CD4-positive, alpha-beta memory T cell (primary cell): ENCODE measurements at regions of chr14 and their contacts with region 1.

Region 1: GRCh38 chr14:64914237-64914971 is at the start of gene CHURC1:
- DNase-seq: peak; percentile 94 to 99 (median 97)
- H3K4me3 ChIP-seq: peak within 1 kb of the TSS; percentile 90 to 99
- H3K4me3 Mint-ChIP-seq: peak within 1 kb of the TSS; percentile 84 to 95 (median 90)
- H3K27ac ChIP-seq: peak within 1 kb of the TSS; percentile 100
- H3K27ac Mint-ChIP-seq: peak within 1 kb of the TSS; percentile 92 to 99 (median 98)
- H3K4me1 ChIP-seq: peaks cover 46% of the 10 kb centered on the region
- H3K4me1 Mint-ChIP-seq: peaks cover 33 to 56% (median 45%) of the 10 kb centered on the region in 4 donors
- H3K27me3 ChIP-seq: no peaks in the 10 kb centered on the region
- H3K27me3 Mint-ChIP-seq: peaks cover 0 to 1% of the 10 kb centered on the region in 2 donors
- total RNA-seq, gene CHURC1: 112 to 116 TPM

Region 2: DNA sequence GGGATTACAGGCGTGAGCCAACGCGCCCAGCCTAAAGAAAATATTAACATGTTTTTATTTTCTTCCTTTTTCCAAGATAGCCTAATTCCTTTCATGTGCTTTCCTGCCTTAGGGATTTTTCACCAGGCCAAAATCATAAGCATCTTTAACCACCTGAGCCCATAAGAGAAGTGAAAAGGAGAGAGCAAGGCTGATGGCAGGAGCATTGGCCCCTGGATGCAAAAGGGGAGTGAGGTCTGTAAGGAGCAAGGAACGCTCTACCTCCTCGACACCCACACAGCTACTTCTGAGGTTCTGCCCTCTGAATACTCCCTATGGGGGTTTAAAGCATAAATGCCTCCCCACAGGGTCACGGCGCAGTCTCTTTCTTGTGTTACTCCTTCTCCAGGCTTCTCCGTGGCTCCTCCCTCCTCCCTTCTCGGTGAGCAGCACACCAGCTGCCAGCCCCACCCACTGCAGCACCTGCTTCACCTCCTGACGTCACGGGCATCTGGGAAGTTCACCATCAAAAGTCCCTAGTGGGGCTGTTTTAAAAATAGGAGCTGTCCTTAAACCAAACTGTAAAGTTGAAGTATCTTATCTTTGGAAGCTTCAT is 102.1 kb before region 1 on chr14:
- CTCF ChIA-PET with region 1: no interaction called
- POLR2A ChIA-PET with region 1: no interaction called
- intact Hi-C with region 1: no loop called
- DNase-seq: peak; percentile 32 to 78 (median 48)
- H3K4me3 ChIP-seq: no peak overlapping the region
- H3K4me3 Mint-ChIP-seq: no peak overlapping the region
- H3K27ac ChIP-seq: no peak overlapping the region
- H3K27ac Mint-ChIP-seq: peak overlapping the region in 2 of 7 donors; percentile 74 to 81
- H3K4me1 ChIP-seq: peaks cover 4% of the 10 kb centered on the region
- H3K4me1 Mint-ChIP-seq: peaks cover 3 to 6% (median 5%) of the 10 kb centered on the region in 4 donors
- H3K27me3 ChIP-seq: no peaks in the 10 kb centered on the region
- H3K27me3 Mint-ChIP-seq: peaks cover 8 to 11% of the 10 kb centered on the region in 2 donors

Region 3: GRCh38 chr14:64928239-64929013 is 14.0 kb after region 1 on chr14:
- CTCF ChIA-PET with region 1: interaction called, 5 read pairs
- POLR2A ChIA-PET with region 1: interaction called, 111 read pairs
- intact Hi-C with region 1: loop called (anchors 1 kb)
- DNase-seq: peak in 4 of 5 donors; percentile 42 to 63 (median 55)
- H3K4me3 ChIP-seq: peak overlapping the region in 1 of 2 donors; percentile 30
- H3K4me3 Mint-ChIP-seq: no peak overlapping the region
- H3K27ac ChIP-seq: peak overlapping the region; percentile 56
- H3K27ac Mint-ChIP-seq: no peak overlapping the region
- H3K4me1 ChIP-seq: peaks cover 86% of the 10 kb centered on the region
- H3K4me1 Mint-ChIP-seq: peaks cover 21 to 38% (median 30%) of the 10 kb centered on the region in 4 donors
- H3K27me3 ChIP-seq: no peaks in the 10 kb centered on the region
- H3K27me3 Mint-ChIP-seq: no peaks in the 10 kb centered on the region

Region 4: DNA sequence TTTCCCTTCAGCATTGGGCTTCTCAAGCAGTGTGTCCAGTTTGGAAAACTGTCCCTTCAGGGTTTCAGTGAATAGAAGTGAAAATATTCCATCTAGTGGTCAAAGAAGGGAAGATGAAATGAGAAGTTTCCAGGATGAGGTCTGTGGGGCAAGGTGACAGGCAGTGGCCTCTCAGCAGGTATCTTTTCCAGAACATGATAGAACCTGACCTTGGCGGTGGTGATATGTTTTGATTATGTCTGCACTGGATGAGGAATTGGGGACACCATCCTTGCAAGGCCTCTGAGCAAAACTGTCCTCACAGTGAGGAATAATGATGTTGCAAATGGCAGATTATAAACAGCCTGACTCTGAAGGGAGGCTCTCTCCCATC is 23.4 kb after region 1 on chr14:
- CTCF ChIA-PET with region 1: interaction called, 4 read pairs
- POLR2A ChIA-PET with region 1: interaction called, 11 read pairs
- intact Hi-C with region 1: no loop called
- DNase-seq: no peak
- H3K4me3 ChIP-seq: no peak overlapping the region
- H3K4me3 Mint-ChIP-seq: no peak overlapping the region
- H3K27ac ChIP-seq: no peak overlapping the region
- H3K27ac Mint-ChIP-seq: peak overlapping the region in 6 of 7 donors; percentile 13 to 70 (median 62)
- H3K4me1 ChIP-seq: peaks cover 17% of the 10 kb centered on the region
- H3K4me1 Mint-ChIP-seq: peaks cover 37 to 83% (median 56%) of the 10 kb centered on the region in 4 donors
- H3K27me3 ChIP-seq: no peaks in the 10 kb centered on the region
- H3K27me3 Mint-ChIP-seq: no peaks in the 10 kb centered on the region

Region 5: DNA sequence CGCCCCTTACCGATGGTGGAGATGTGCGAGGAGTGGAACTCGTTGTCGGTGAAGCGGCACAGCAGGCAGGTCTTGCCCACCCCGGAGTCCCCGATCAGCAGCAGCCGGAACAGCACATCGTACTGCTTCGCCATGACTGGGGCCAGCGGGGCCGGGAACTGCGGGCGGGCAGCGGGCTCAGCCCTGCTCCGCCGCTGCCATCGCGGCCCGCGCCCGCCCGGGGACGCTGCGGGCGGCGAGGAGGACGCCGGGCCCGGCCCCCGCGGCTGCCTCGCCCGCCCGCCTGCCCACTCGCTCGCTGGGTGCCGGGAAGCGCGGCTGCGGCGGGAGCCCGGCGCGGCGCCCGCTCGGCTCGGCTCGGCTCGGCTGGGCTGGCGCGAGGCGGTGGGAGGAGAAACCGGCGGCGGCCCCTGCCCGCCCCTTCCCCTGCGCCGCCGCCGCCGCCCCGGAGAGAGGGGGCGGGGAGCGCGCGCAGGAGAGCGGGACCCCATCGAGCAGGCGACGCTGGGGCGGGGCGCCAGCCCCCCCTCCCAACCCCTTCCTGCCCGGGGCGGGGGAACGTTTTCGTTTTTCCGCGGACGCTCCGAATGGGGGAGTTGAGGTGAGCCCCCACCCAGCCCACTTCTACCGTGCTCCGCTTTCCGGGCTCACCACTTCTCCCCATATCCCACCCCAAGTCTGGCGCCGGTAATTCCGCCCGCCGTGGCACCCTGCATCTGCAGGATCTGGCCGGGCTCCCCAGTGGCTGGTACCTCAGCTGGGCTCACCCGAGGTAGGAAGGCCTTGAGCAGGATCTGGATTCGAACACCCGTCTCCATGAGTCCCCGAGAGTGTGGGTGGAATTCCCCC is 57.8 kb after region 1 on chr14 and contains the start of gene RAB15:
- CTCF ChIA-PET with region 1: interaction called, 3 read pairs
- POLR2A ChIA-PET with region 1: interaction called, 8 read pairs
- intact Hi-C with region 1: loop called (anchors 2 kb)
- DNase-seq: peak; percentile 34 to 56 (median 39)
- H3K4me3 ChIP-seq: peak within 1 kb of the TSS; percentile 42 to 62
- H3K4me3 Mint-ChIP-seq: peak within 1 kb of the TSS; percentile 82 to 89 (median 87)
- H3K27ac ChIP-seq: peak within 1 kb of the TSS; percentile 43
- H3K27ac Mint-ChIP-seq: peak within 1 kb of the TSS; percentile 40 to 89 (median 75)
- H3K4me1 ChIP-seq: peaks cover 16% of the 10 kb centered on the region
- H3K4me1 Mint-ChIP-seq: peaks cover 13 to 23% (median 16%) of the 10 kb centered on the region in 4 donors
- H3K27me3 ChIP-seq: no peaks in the 10 kb centered on the region
- H3K27me3 Mint-ChIP-seq: no peaks in the 10 kb centered on the region
- total RNA-seq, gene RAB15: 5.2 to 5.4 TPM

Region 6: GRCh38 chr14:65102441-65103149 is 188.2 kb after region 1 on chr14 and contains the start of gene MAX:
- CTCF ChIA-PET with region 1: no interaction called
- POLR2A ChIA-PET with region 1: interaction called, 3 read pairs
- intact Hi-C with region 1: loop called (anchors 1 kb)
- DNase-seq: peak; percentile 98 to 100 (median 100)
- H3K4me3 ChIP-seq: peak within 1 kb of the TSS; percentile 77 to 100
- H3K4me3 Mint-ChIP-seq: peak within 1 kb of the TSS; percentile 91 to 100 (median 96)
- H3K27ac ChIP-seq: peak within 1 kb of the TSS; percentile 96
- H3K27ac Mint-ChIP-seq: peak within 1 kb of the TSS; percentile 92 to 99 (median 97)
- H3K4me1 ChIP-seq: peaks cover 41% of the 10 kb centered on the region
- H3K4me1 Mint-ChIP-seq: peaks cover 24 to 49% (median 35%) of the 10 kb centered on the region in 4 donors
- H3K27me3 ChIP-seq: no peaks in the 10 kb centered on the region
- H3K27me3 Mint-ChIP-seq: peaks cover 2 to 3% of the 10 kb centered on the region in 2 donors
- total RNA-seq, gene MAX: 188 to 212 TPM

Region 7: GRCh38 chr14:65277027-65277426 is 362.6 kb after region 1 on chr14:
- CTCF ChIA-PET with region 1: no interaction called
- POLR2A ChIA-PET with region 1: no interaction called
- intact Hi-C with region 1: no loop called
- DNase-seq: no peak
- H3K4me3 ChIP-seq: no peak overlapping the region
- H3K4me3 Mint-ChIP-seq: no peak overlapping the region
- H3K27ac ChIP-seq: no peak overlapping the region
- H3K27ac Mint-ChIP-seq: peak overlapping the region in 1 of 7 donors; percentile 51
- H3K4me1 ChIP-seq: peaks cover 5% of the 10 kb centered on the region
- H3K4me1 Mint-ChIP-seq: peaks cover 4 to 10% (median 5%) of the 10 kb centered on the region in 4 donors
- H3K27me3 ChIP-seq: no peaks in the 10 kb centered on the region
- H3K27me3 Mint-ChIP-seq: no peaks in the 10 kb centered on the region